ENCODE measurements at regions of chr20 and their contacts with region 1.

Region 1: GRCh38 chr20:53926428-53927028 is 143.9 kb downstream of the BCAS1 start:
- DNase-seq: peak in 2 of 5 donors; percentile 72 to 86
- H3K4me3 ChIP-seq: no peak overlapping the region
- H3K27ac ChIP-seq: peak overlapping the region; percentile 19 to 62
- H3K4me1 ChIP-seq: peaks cover 5 to 8% (median 6%) of the 10 kb centered on the region in 3 donors
- H3K27me3 ChIP-seq: no peaks in the 10 kb centered on the region
- CTCF ChIP-seq: no peak

Region 2: DNA sequence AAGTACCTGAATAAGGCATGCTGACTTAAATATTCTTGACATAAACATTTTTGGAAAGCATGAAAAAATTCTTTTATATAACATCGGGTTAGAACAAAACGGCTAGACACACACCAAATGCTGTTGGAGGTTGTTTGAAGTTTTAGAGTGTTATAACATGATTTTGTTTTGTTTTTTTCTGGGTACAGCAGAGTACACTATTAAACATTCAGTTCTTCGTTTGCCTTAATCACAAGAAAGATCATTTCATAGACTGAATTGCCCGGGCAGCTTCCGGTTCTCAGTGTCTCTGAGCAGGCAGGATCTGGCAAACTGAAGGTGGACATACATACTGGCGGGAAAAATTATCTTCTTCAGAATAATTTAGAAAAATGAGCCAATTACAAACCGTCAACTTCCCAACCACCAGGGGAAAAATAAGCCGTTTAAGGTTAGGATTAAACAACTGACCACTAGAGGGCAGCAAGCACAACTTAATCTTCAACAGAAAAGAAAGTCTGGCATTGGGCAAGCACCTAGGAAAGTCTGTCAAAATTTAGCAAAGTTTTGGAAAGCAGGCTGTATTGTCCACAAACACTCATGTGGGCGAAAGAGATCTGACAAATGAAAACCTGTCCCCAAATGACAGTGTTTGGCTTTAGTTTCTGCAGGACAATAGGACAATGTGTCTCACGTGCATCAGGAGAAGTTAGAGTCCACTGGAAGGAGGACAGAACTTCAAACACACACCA is 347.9 kb before region 1 on chr20:
- intact Hi-C with region 1: loop called (anchors 10 kb)
- DNase-seq: peak in 4 of 5 donors; percentile 53 to 95 (median 84)
- H3K4me3 ChIP-seq: peak overlapping the region in 2 of 3 donors; percentile 14 to 39
- H3K27ac ChIP-seq: peak overlapping the region; percentile 77 to 84
- H3K4me1 ChIP-seq: peaks cover 4 to 20% (median 18%) of the 10 kb centered on the region in 3 donors
- H3K27me3 ChIP-seq: no peaks in the 10 kb centered on the region
- CTCF ChIP-seq: peak; percentile 86

Region 3: GRCh38 chr20:53805895-53806384 is 120.6 kb before region 1 on chr20:
- intact Hi-C with region 1: no loop called
- DNase-seq: no peak
- H3K4me3 ChIP-seq: no peak overlapping the region
- H3K27ac ChIP-seq: no peak overlapping the region
- H3K4me1 ChIP-seq: no peaks in the 10 kb centered on the region
- H3K27me3 ChIP-seq: no peaks in the 10 kb centered on the region
- CTCF ChIP-seq: no peak

Region 4: GRCh38 chr20:54276577-54277194 is 350.2 kb after region 1 on chr20:
- intact Hi-C with region 1: no loop called
- DNase-seq: no peak
- H3K4me3 ChIP-seq: no peak overlapping the region
- H3K27ac ChIP-seq: no peak overlapping the region
- H3K4me1 ChIP-seq: no peaks in the 10 kb centered on the region
- H3K27me3 ChIP-seq: no peaks in the 10 kb centered on the region
- CTCF ChIP-seq: no peak

Region 5: GRCh38 chr20:54320115-54320607 is 393.6 kb after region 1 on chr20:
- intact Hi-C with region 1: no loop called
- DNase-seq: no peak
- H3K4me3 ChIP-seq: no peak overlapping the region
- H3K27ac ChIP-seq: no peak overlapping the region
- H3K4me1 ChIP-seq: no peaks in the 10 kb centered on the region
- H3K27me3 ChIP-seq: no peaks in the 10 kb centered on the region
- CTCF ChIP-seq: no peak

Measured in kidney (tissue), 22 donors.